ENCODE measurements at regions of chr13 and their contacts with region 1.

Region 1: DNA sequence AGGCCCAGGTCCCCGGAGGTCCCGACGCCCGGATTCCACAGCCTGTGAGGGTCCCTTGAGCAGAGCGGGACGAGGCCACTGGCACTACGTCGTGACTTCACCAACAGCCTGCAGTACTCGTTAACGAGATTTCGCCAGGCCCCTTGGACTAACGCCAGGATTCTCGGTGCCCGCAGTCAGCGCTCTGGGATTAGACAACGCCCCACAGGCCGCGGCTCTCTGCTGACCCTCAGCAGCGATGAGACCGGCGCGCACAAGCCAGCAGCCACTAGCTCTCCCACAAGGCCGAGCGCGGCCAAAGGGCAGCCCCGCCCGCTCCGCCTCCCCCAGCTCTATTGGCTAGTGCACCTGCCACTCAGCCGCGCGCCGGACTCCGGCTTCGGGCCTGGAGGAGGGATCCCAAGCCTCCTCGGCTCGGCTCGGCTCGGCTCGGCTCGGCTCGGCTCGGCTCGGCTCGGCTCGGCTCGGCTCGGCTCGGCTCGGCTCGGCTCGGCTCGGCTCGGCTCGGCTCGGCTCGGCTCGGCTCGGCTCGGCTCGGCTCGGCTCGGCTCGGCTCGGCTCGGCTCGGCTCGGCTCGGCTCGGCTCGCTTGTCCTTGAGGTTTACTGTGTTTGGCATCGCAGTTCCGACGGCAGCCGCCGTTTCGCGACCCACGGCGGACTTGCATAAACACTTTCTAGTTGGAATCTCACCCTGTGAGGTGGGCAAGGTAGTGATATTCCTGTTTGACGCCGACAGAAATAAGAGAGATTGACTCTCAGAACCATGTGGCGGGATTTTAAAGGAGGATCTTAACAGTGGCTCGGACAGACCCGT is 231.7 kb upstream of the SERP2 start:
- DNase-seq: peak; percentile 97
- H3K4me3 Mint-ChIP-seq: peak overlapping the region; percentile 91
- H3K27ac Mint-ChIP-seq: peak overlapping the region; percentile 100
- H3K4me1 Mint-ChIP-seq: peaks cover 14% of the 10 kb centered on the region
- H3K27me3 Mint-ChIP-seq: no peaks in the 10 kb centered on the region
- CTCF ChIP-seq: no peak

Region 2: DNA sequence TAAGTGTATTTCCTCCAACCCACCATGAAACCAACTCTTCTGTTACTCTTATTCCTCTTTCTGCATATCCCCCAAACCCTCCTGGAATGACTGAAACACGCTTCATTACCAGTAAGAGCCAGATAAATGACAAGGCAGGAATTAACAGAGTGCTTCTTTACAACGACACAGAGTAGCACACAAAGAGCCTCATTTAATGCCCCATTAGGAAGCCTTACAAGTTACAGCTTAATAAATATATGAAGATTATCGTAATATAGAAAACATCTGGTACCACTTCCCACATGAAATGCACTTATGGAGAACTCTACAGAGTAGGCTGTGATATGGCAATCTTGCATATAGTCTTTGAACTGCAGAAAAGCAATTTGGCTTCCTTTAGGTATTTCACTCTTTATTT is 472.0 kb before region 1 on chr13:
- CTCF ChIA-PET with region 1: no interaction called
- POLR2A ChIA-PET with region 1: no interaction called
- intact Hi-C with region 1: no loop called
- DNase-seq: no peak
- H3K4me3 Mint-ChIP-seq: no peak overlapping the region
- H3K27ac Mint-ChIP-seq: no peak overlapping the region
- H3K4me1 Mint-ChIP-seq: peaks cover 1% of the 10 kb centered on the region
- H3K27me3 Mint-ChIP-seq: no peaks in the 10 kb centered on the region
- CTCF ChIP-seq: no peak

Region 3: DNA sequence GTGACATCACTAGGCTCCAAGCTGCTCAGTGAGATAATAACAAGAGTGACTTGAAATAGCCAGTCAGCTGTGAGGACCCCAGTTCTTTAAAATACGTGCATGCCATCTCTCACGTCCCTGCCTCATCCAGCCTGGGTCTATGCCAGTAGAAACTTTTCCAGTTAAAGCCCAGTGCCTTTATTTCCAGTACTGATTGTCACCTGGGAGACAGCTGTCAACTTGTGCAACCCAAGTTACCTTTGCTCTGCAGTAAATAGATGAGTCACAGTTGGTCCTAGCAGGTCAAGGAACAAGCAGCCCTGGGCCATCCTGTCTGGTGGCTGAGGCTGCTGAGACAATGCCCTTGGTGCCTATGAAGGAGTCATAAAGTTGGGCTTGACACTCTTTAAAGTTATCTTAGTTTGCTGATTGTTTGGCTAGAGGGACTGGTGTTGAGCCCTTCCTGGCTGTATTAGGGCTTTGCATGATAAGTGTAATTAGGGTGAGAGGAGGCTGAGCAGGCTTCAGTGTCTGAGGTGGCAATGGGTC is 33.5 kb before region 1 on chr13:
- CTCF ChIA-PET with region 1: interaction called, 4 read pairs
- POLR2A ChIA-PET with region 1: interaction called, 17 read pairs
- intact Hi-C with region 1: no loop called
- DNase-seq: peak; percentile 51
- H3K4me3 Mint-ChIP-seq: no peak overlapping the region
- H3K27ac Mint-ChIP-seq: no peak overlapping the region
- H3K4me1 Mint-ChIP-seq: peaks cover 9% of the 10 kb centered on the region
- H3K27me3 Mint-ChIP-seq: no peaks in the 10 kb centered on the region
- CTCF ChIP-seq: no peak

Region 4: GRCh38 chr13:44231786-44232516 is 90.0 kb after region 1 on chr13:
- CTCF ChIA-PET with region 1: no interaction called
- POLR2A ChIA-PET with region 1: interaction called, 8 read pairs
- intact Hi-C with region 1: loop called (anchors 1 kb)
- DNase-seq: peak; percentile 99
- H3K4me3 Mint-ChIP-seq: peak overlapping the region; percentile 34
- H3K27ac Mint-ChIP-seq: peak overlapping the region; percentile 86
- H3K4me1 Mint-ChIP-seq: peaks cover 28% of the 10 kb centered on the region
- H3K27me3 Mint-ChIP-seq: no peaks in the 10 kb centered on the region
- CTCF ChIP-seq: no peak